ENCODE measurements at regions of chr1 and their contacts with region 1.

Region 1: DNA sequence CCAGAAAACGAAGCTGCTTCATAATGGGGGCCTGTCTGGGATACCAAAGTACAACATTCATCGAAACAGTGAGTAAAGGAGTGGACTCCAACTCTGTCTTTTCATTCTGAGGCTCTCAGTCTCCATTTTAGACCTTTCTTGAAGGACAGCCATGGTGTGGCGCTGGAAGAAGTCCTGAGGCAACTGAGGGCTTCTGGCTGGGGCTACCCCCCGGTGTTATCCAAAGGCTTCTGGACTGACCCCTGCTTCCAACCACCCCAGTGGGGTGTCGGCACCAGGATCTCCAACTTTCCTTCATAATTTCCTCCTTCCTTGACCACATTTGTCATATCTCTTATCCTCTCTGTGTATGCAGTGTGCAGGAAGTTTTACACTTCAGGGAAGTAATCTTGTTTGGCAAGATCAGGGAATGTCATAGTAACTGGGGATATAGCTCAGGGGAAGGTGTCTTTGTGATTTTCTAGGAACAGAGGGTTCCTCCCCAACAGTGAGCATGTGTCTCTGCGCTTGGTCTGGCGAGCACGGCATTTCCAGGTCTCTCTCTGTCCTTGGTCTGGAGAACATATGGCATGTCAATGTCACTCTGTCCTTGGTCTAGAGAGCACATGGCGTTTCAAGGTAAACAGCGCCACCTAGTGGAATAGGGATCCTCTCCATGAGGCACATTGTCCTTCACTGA is 19.4 kb upstream of the BSDC1 start:
- DNase-seq: peak in 1 of 2 donors; percentile 75
- H3K4me3 ChIP-seq: no peak overlapping the region
- H3K27ac ChIP-seq: no peak overlapping the region
- H3K4me1 ChIP-seq: no peaks in the 10 kb centered on the region
- H3K27me3 ChIP-seq: no peaks in the 10 kb centered on the region
- CTCF ChIP-seq: peak; percentile 56 to 79 (median 67)

Region 2: GRCh38 chr1:32400876-32401631 is 12.6 kb before region 1 on chr1:
- intact Hi-C with region 1: loop called (anchors 1 kb)
- DNase-seq: peak; percentile 61 to 95
- H3K4me3 ChIP-seq: no peak overlapping the region
- H3K27ac ChIP-seq: peak overlapping the region; percentile 66 to 72
- H3K4me1 ChIP-seq: peaks cover 0 to 3% of the 10 kb centered on the region in 2 donors
- H3K27me3 ChIP-seq: no peaks in the 10 kb centered on the region
- CTCF ChIP-seq: peak; percentile 88 to 93 (median 89)

Region 3: GRCh38 chr1:32521165-32521564 is 107.5 kb after region 1 on chr1:
- intact Hi-C with region 1: no loop called
- DNase-seq: no peak
- H3K4me3 ChIP-seq: no peak overlapping the region
- H3K27ac ChIP-seq: no peak overlapping the region
- H3K4me1 ChIP-seq: no peaks in the 10 kb centered on the region
- H3K27me3 ChIP-seq: no peaks in the 10 kb centered on the region
- CTCF ChIP-seq: no peak